PC-3 (cell line): ENCODE measurements at regions of chr3 and their contacts with region 1.

Region 1: GRCh38 chr3:196251918-196252317 is 35.6 kb downstream of the SLC51A start:
- DNase-seq: no peak
- ATAC-seq: no peak
- H3K4me3 ChIP-seq: no peak overlapping the region
- H3K27ac ChIP-seq: no peak overlapping the region
- H3K4me1 ChIP-seq: peaks cover 11% of the 10 kb centered on the region
- H3K27me3 ChIP-seq: no peaks in the 10 kb centered on the region
- CTCF ChIP-seq: no peak

Region 2: GRCh38 chr3:195999896-196000295 is 252.0 kb before region 1 on chr3:
- CTCF ChIA-PET with region 1: no interaction called
- POLR2A ChIA-PET with region 1: no interaction called
- intact Hi-C with region 1: no loop called
- DNase-seq: no peak
- ATAC-seq: no peak
- H3K4me3 ChIP-seq: no peak overlapping the region
- H3K27ac ChIP-seq: no peak overlapping the region
- H3K4me1 ChIP-seq: no peaks in the 10 kb centered on the region
- H3K27me3 ChIP-seq: no peaks in the 10 kb centered on the region
- CTCF ChIP-seq: no peak

Region 3: GRCh38 chr3:196298521-196298920 is 46.6 kb after region 1 on chr3:
- CTCF ChIA-PET with region 1: no interaction called
- POLR2A ChIA-PET with region 1: no interaction called
- intact Hi-C with region 1: no loop called
- DNase-seq: no peak
- ATAC-seq: no peak
- H3K4me3 ChIP-seq: no peak overlapping the region
- H3K27ac ChIP-seq: no peak overlapping the region
- H3K4me1 ChIP-seq: no peaks in the 10 kb centered on the region
- H3K27me3 ChIP-seq: no peaks in the 10 kb centered on the region
- CTCF ChIP-seq: no peak

Region 4: GRCh38 chr3:196432137-196432879 is 180.4 kb after region 1 on chr3 and contains the start of gene UBXN7:
- CTCF ChIA-PET with region 1: no interaction called
- POLR2A ChIA-PET with region 1: no interaction called
- intact Hi-C with region 1: loop called (anchors 10 kb)
- DNase-seq: peak; percentile 94
- ATAC-seq: peak; percentile 93
- H3K4me3 ChIP-seq: peak within 1 kb of the TSS; percentile 94
- H3K27ac ChIP-seq: peak within 1 kb of the TSS; percentile 7
- H3K4me1 ChIP-seq: peaks cover 11% of the 10 kb centered on the region; the same call in 1 of the 2 replicates
- H3K27me3 ChIP-seq: no peaks in the 10 kb centered on the region
- CTCF ChIP-seq: no peak
- total RNA-seq, gene UBXN7: 10.2 and 10.5 TPM in 2 replicates

Region 5: GRCh38 chr3:196518966-196519717 is 267.2 kb after region 1 on chr3:
- CTCF ChIA-PET with region 1: interaction called, 3 read pairs
- POLR2A ChIA-PET with region 1: no interaction called
- intact Hi-C with region 1: loop called (anchors 2 kb)
- DNase-seq: peak; percentile 86
- ATAC-seq: peak; percentile 71
- H3K4me3 ChIP-seq: no peak overlapping the region
- H3K27ac ChIP-seq: no peak overlapping the region
- H3K4me1 ChIP-seq: no peaks in the 10 kb centered on the region
- H3K27me3 ChIP-seq: no peaks in the 10 kb centered on the region
- CTCF ChIP-seq: peak; percentile 74

Region 6: GRCh38 chr3:196684548-196685407 is 432.9 kb after region 1 on chr3:
- CTCF ChIA-PET with region 1: no interaction called
- POLR2A ChIA-PET with region 1: no interaction called
- intact Hi-C with region 1: loop called (anchors 10 kb)
- DNase-seq: peak; percentile 80
- ATAC-seq: peak; percentile 88
- H3K4me3 ChIP-seq: 0 out of 2 replicates have a peak overlapping the region, but pooled peaks have one; percentile 21
- H3K27ac ChIP-seq: no peak overlapping the region
- H3K4me1 ChIP-seq: no peaks in the 10 kb centered on the region
- H3K27me3 ChIP-seq: 0 out of 2 replicates have a peak, but pooled peaks cover 3% of the 10 kb centered on the region
- CTCF ChIP-seq: peak; percentile 88